ENCODE measurements at regions of chr17 and their contacts with region 1.

Region 1: GRCh38 chr17:75289115-75289831 is at the start of gene SLC25A19:
- DNase-seq: peak; percentile 99
- H3K4me3 Mint-ChIP-seq: peak within 1 kb of the TSS; percentile 100
- H3K27ac Mint-ChIP-seq: peak within 1 kb of the TSS; percentile 100
- H3K4me1 Mint-ChIP-seq: peaks cover 19% of the 10 kb centered on the region
- H3K27me3 Mint-ChIP-seq: no peaks in the 10 kb centered on the region
- total RNA-seq, gene SLC25A19: 131 and 132 TPM in 2 replicates

Region 2: DNA sequence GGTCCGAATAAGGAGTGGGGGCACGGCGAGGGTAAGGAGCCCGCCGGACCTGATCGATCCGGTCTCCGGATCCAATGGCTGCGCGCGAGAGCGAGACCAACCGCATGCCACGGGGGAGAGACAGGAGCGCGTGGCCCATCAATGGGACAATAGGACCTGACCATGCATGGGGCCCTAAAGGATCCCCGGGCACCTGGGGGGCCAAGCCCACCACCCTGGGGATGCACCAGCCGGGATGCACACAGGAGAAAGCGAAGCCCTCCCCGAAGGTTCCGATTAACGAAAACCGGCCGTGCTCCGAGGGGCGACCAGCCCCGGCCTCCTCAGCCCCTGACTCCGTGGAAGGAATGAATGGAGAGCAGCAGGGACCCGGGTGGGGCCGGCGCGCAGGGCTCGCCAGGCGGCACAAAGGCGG is 135.5 kb before region 1 on chr17:
- intact Hi-C with region 1: no loop called
- DNase-seq: peak; percentile 81
- H3K4me3 Mint-ChIP-seq: peak overlapping the region; percentile 98
- H3K27ac Mint-ChIP-seq: peak overlapping the region; percentile 96
- H3K4me1 Mint-ChIP-seq: peaks cover 30% of the 10 kb centered on the region
- H3K27me3 Mint-ChIP-seq: no peaks in the 10 kb centered on the region

Region 3: GRCh38 chr17:75250009-75250471 is 39.2 kb before region 1 on chr17:
- intact Hi-C with region 1: loop called (anchors 1 kb)
- DNase-seq: peak; percentile 90
- H3K4me3 Mint-ChIP-seq: peak overlapping the region; percentile 86
- H3K27ac Mint-ChIP-seq: peak overlapping the region; percentile 98
- H3K4me1 Mint-ChIP-seq: peaks cover 52% of the 10 kb centered on the region
- H3K27me3 Mint-ChIP-seq: no peaks in the 10 kb centered on the region

Region 4: DNA sequence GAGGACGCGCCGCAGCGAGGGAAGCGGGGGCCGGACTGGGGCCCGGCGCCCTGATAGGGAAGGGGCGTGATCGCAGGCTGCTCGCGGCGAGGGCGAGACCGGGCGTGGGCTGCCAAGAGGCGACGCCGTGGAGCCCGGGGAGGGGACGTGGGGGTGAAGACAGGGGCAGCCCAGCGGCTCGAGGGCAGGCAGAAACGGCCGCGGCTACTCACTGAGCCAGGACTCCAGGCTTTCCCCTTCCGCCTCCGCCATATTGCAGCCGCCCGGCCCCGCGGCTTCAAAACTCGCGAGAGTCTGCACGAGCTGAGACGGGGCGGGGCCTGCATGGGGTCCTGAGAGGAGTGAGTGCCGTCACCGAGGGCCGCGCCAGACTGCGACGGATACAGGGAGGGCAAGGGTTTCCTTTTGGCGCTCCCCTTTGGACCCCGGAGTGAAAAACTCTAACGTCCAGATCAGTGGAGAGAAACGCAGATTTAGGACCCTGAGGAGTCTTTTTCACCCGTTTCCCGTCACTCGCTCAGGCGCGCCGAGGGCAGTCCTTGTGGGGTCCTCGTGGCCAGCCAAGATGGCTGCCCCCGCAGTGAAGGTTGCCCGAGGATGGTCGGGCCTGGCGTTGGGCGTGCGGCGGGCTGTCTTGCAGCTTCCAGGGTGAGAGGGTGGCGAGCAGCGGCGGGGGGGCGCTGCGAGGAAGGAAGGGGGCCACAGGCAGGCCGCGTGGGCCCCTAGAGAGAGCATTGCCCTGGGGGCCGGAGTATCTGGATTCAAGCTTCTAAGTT is 27.7 kb before region 1 on chr17 and contains the starts of genes GGA3 and MRPS7:
- intact Hi-C with region 1: loop called (anchors 1 kb)
- DNase-seq: peak; percentile 99
- H3K4me3 Mint-ChIP-seq: peak within 1 kb of the TSS; percentile 94
- H3K27ac Mint-ChIP-seq: peak within 1 kb of the TSS; percentile 99
- H3K4me1 Mint-ChIP-seq: peaks cover 37% of the 10 kb centered on the region
- H3K27me3 Mint-ChIP-seq: no peaks in the 10 kb centered on the region
- total RNA-seq, gene GGA3: 84.2 and 86.9 TPM in 2 replicates
- total RNA-seq, gene MRPS7: 121 and 127 TPM in 2 replicates

Region 5: DNA sequence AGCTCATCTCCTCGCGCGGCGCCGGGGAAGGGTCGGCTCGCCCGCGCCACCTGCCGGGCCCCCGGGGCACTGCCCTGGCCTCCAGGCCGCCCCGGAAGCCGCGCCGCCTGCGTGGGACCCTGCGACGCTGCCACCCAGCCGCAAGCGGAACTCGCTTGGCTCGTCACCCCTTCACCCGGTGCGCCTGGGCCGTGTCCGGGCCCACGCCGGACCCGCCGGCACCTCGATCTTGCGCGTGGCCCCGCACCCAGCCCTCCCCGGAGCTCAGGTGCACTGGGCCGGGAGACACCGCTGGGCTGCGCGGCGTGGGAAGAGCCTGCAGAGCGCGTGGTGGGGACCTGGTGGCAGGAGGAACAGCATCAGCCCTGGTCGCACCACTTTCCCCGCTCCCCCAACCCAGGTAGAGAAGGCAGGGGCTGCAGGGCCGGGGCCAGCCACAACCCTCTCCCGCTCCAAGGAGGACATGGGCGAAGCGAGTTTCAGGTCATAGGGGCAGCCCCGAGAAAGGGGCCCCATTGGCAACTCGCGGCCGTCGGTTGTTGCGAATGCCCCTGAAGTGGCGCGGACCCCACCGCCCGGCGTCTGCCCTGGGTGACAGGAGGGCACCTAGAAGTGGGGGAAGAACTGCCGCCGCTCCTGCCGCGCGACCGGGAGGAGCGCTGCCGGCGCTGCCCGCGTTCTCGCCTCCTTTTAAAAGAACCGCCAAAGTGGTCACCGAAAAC is 17.9 kb before region 1 on chr17:
- intact Hi-C with region 1: loop called (anchors 1 kb)
- DNase-seq: peak; percentile 97
- H3K4me3 Mint-ChIP-seq: peak overlapping the region; percentile 89
- H3K27ac Mint-ChIP-seq: peak overlapping the region; percentile 87
- H3K4me1 Mint-ChIP-seq: peaks cover 32% of the 10 kb centered on the region
- H3K27me3 Mint-ChIP-seq: no peaks in the 10 kb centered on the region

Region 6: DNA sequence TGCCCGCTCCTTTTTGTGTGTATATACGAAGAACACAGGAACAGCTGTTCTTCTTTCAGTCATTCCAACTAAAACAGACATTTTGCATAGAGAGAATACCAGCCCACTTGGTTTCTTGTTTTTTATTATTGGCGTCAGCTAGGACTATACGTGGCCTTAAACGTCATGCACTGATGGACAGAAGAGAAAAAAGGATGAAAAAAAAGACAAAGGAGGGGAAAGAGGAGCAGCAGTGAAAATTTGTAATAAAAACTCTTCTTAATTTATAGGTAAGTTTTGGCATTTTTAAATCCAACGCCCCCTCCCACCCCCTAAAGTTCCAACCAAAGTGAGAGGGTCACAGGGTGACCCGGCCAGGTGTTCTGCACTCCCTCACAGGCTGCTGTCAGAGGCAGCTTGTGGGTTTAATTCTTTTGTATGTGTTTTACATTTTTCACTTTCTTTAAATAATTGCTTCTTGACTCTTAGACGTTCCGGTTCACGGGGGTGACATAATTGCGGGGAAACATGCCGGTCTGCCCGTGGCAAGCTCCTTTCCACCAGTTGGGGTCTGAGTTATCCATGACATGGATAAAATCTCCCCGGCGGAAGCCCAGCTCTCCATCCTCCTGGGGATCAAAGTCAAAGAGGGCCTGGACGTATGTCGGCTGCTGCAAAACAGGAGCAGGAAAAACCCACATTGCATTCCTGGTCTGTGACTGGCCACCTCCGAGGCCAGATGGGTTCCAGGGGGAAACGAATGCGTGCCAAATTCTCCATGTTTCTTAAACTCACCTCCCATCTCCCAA is 30.8 kb after region 1 on chr17:
- intact Hi-C with region 1: loop called (anchors 2 kb)
- DNase-seq: no peak
- H3K4me3 Mint-ChIP-seq: no peak overlapping the region
- H3K27ac Mint-ChIP-seq: no peak overlapping the region
- H3K4me1 Mint-ChIP-seq: peaks cover 14% of the 10 kb centered on the region
- H3K27me3 Mint-ChIP-seq: no peaks in the 10 kb centered on the region

Region 7: DNA sequence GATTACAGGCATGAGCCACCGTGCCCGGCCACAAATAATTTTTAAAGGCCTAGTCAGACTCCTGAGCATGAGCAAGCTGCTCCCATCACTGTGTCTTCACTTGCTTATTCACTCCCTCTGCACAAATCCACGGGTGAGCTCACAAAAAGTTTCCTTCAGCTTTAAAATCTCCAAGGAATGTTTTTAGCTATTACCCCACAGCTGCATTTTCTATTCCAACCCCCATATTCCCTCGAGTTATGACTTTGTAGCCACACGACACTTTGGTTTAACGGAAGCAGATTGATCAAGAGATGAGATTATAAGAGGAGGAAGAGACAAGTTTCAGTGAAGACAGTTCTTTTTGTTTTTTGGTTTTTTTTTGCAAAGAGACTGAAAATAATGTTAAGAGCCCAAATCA is 49.1 kb after region 1 on chr17:
- intact Hi-C with region 1: loop called (anchors 1 kb)
- DNase-seq: peak; percentile 75
- H3K4me3 Mint-ChIP-seq: peak overlapping the region; percentile 69
- H3K27ac Mint-ChIP-seq: peak overlapping the region; percentile 86
- H3K4me1 Mint-ChIP-seq: peaks cover 61% of the 10 kb centered on the region
- H3K27me3 Mint-ChIP-seq: no peaks in the 10 kb centered on the region

Region 8: DNA sequence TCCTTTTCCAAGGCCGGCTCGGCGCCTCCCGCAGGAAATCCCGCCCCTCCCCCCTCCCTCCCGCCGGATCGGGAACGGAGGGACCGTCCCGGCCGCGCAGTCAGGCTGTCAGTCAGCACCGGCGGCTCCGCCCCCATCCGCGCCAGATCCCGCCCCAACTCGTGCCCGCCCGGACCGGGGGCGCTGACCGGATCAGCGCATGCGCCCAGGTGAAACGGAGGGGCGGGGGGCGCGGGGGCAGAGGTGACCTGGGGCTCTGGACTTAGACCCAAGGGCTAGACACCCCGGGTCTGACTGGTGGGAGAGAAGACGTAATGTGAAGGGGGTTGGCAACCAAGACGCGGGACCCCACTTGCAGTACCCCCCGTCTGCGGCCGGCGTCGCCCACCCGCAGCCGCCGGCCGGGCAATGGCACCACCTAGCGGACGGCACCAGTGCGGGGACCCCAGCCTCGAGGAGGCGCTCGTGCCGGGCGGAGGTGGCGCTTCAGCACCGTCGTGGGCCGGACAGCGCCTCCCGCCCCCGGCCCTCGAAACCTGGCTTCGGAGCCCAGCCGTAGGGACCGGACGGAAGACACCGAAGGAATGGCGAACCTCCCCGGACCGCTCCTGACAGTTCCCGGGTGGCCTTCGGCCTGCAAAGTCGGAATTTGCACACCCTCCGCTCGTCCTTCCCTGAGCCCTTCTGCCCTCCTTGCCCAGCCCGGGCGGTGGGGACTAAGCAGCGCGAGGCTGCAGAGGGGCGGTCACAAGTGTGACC is 226.4 kb after region 1 on chr17 and contains the start of gene CASKIN2:
- intact Hi-C with region 1: loop called (anchors 10 kb)
- DNase-seq: peak; percentile 93
- H3K4me3 Mint-ChIP-seq: peak within 1 kb of the TSS; percentile 82
- H3K27ac Mint-ChIP-seq: peak within 1 kb of the TSS; percentile 51
- H3K4me1 Mint-ChIP-seq: peaks cover 22% of the 10 kb centered on the region
- H3K27me3 Mint-ChIP-seq: peaks cover 7% of the 10 kb centered on the region
- total RNA-seq, gene CASKIN2: 1.4 and 1.6 TPM in 2 replicates

Measured in activated CD4-positive, alpha-beta T cell treated with anti-CD3 and anti-CD28 coated beads, Interleukin-2, amount 10 ng/mL, durations not matched to agents 24 days and 14 days (primary cell).